ENCODE measurements at regions of chrX and their contacts with region 1.

Region 1: DNA sequence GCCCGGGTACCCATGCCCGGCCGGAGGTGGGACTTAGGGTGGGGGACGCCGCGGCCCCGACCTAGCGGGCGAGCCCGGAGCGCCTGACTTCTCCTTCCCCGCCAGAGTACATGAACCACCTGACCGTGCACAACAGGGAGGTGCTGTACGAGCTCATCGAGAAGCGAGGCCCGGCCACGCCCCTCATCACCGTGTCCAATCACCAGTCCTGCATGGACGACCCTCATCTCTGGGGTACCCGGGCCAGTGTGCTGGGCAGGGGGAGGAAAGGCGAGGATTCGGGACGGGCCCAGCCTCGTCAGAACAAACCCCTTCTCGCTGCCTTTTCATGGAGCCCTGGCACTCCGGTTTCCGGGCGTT is 622 bp downstream of the TAFAZZIN start:
- DNase-seq: peak in 1 of 3 donors; percentile 22
- H3K4me3 ChIP-seq: peak overlapping the region; percentile 45 to 76 (median 55)
- H3K4me3 Mint-ChIP-seq: peak overlapping the region; percentile 72 to 82
- H3K27ac ChIP-seq: peak overlapping the region; percentile 80 to 89
- H3K27ac Mint-ChIP-seq: peak overlapping the region; percentile 82 to 92 (median 90)
- H3K4me1 ChIP-seq: peaks cover 39 to 42% of the 10 kb centered on the region in 2 donors
- H3K4me1 Mint-ChIP-seq: peaks cover 18% of the 10 kb centered on the region
- H3K27me3 ChIP-seq: no peaks in the 10 kb centered on the region
- H3K27me3 Mint-ChIP-seq: peaks cover 0 to 6% (median 4%) of the 10 kb centered on the region in 3 donors
- CTCF ChIP-seq: no peak

Region 2: GRCh38 chrX:154308108-154308946 is 103.6 kb before region 1 on chrX:
- intact Hi-C with region 1: no loop called
- DNase-seq: peak; percentile 60 to 66 (median 62)
- H3K4me3 ChIP-seq: no peak overlapping the region
- H3K4me3 Mint-ChIP-seq: no peak overlapping the region
- H3K27ac ChIP-seq: no peak overlapping the region
- H3K27ac Mint-ChIP-seq: peak overlapping the region in 5 of 7 donors; percentile 5 to 81 (median 66)
- H3K4me1 ChIP-seq: peaks cover 39 to 43% of the 10 kb centered on the region in 2 donors
- H3K4me1 Mint-ChIP-seq: peaks cover 56% of the 10 kb centered on the region
- H3K27me3 ChIP-seq: no peaks in the 10 kb centered on the region
- H3K27me3 Mint-ChIP-seq: peaks cover 0 to 21% (median 0%) of the 10 kb centered on the region in 3 donors
- CTCF ChIP-seq: peak; percentile 74

Region 3: DNA sequence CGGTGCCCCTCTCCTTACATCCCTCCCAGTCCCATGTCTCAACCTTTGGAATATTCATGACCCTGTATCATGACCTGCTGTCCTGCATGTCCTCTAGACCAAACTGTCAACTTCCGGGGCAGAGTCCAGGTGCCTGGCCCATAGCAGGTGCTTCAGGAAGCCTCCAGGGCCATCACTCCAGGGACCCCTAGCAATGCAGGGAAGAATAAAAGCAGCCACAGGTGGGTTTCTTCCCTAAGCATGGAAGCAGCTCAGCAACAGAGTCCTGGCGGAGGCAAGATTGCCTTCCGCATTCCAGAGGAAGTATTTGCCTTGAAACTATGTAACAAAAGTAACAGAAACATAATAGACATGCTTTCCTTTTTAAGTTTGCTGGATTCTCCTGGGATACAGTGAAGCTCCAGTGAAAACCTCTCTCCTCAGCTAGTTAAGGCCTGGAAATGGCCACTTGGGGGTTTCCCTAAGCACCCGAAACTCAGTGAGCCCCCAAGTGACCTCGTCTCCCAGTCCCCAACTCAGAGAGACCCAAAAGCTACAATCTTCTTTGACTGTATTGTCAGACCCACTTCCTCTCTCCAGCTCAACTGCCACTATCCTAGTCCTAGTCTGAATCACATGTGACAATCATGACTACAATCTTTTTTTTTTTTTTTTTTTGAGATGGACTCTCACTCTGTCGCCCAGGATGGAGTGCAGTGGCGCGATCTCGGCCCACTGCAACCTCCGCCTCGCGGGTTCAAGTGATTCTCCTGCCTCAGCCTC is 15.2 kb after region 1 on chrX:
- intact Hi-C with region 1: loop called in 1 of 2 experiments (anchors 2 kb)
- DNase-seq: peak; percentile 34 to 72 (median 50)
- H3K4me3 ChIP-seq: peak overlapping the region in 1 of 3 experiments; percentile 87
- H3K4me3 Mint-ChIP-seq: peak overlapping the region; percentile 81 to 84
- H3K27ac ChIP-seq: peak overlapping the region; percentile 78
- H3K27ac Mint-ChIP-seq: peak overlapping the region; percentile 30 to 99 (median 90)
- H3K4me1 ChIP-seq: peaks cover 50 to 64% of the 10 kb centered on the region in 2 donors
- H3K4me1 Mint-ChIP-seq: peaks cover 51% of the 10 kb centered on the region
- H3K27me3 ChIP-seq: no peaks in the 10 kb centered on the region
- H3K27me3 Mint-ChIP-seq: peaks cover 0 to 2% (median 0%) of the 10 kb centered on the region in 3 donors
- CTCF ChIP-seq: no peak

Region 4: GRCh38 chrX:154515878-154516655 is 104.1 kb after region 1 on chrX and contains the start of gene FAM3A:
- intact Hi-C with region 1: loop called in 1 of 2 experiments (anchors 5 kb)
- DNase-seq: peak; percentile 77 to 82 (median 81)
- H3K4me3 ChIP-seq: peak within 1 kb of the TSS; percentile 61 to 81 (median 65)
- H3K4me3 Mint-ChIP-seq: peak within 1 kb of the TSS; percentile 84 to 88
- H3K27ac ChIP-seq: peak within 1 kb of the TSS; percentile 83 to 84
- H3K27ac Mint-ChIP-seq: peak within 1 kb of the TSS; percentile 84 to 96 (median 90)
- H3K4me1 ChIP-seq: peaks cover 13 to 14% of the 10 kb centered on the region in 2 donors
- H3K4me1 Mint-ChIP-seq: peaks cover 11% of the 10 kb centered on the region
- H3K27me3 ChIP-seq: no peaks in the 10 kb centered on the region
- H3K27me3 Mint-ChIP-seq: peaks cover 0 to 8% (median 0%) of the 10 kb centered on the region in 3 donors
- CTCF ChIP-seq: no peak
- polyA plus RNA-seq, gene FAM3A: 14.5 to 26.5 (median 16.3) TPM

Region 5: DNA sequence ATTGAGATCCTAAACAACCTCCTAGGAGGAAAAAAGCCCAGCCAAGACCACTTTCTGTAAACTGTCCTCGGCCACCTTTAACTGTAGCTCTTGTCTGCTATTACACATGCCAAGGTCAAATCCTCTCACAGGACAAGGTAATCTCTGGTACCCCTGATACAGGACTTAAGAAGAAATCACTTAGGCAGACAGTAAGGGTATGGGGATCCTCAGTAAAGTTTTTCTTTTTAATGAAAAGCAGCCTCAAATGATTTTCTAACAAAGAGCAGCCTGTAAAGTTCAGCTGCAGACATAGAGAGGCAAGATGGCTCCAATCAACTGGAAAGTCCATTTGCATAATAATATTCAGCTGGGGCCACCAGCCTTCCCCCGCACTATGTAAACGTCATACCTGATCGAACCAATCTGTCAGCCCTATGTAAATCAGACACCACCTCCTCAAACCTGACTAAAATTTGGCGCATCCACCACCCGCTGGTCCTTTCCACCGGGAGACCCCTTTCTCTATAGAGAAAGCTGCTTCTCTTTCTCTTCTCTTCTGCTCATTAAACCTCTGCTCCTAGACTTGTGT is 407.9 kb after region 1 on chrX:
- intact Hi-C with region 1: no loop called
- DNase-seq: no peak
- H3K4me3 ChIP-seq: no peak overlapping the region
- H3K4me3 Mint-ChIP-seq: no peak overlapping the region
- H3K27ac ChIP-seq: no peak overlapping the region
- H3K27ac Mint-ChIP-seq: peak overlapping the region in 1 of 7 donors; percentile 42
- H3K4me1 ChIP-seq: no peaks in the 10 kb centered on the region
- H3K4me1 Mint-ChIP-seq: no peaks in the 10 kb centered on the region
- H3K27me3 ChIP-seq: no peaks in the 10 kb centered on the region
- H3K27me3 Mint-ChIP-seq: peaks cover 0 to 2% (median 0%) of the 10 kb centered on the region in 3 donors
- CTCF ChIP-seq: no peak